HepG2 (cell line): ENCODE measurements at regions of chr7 and their contacts with region 1.

Region 1: DNA sequence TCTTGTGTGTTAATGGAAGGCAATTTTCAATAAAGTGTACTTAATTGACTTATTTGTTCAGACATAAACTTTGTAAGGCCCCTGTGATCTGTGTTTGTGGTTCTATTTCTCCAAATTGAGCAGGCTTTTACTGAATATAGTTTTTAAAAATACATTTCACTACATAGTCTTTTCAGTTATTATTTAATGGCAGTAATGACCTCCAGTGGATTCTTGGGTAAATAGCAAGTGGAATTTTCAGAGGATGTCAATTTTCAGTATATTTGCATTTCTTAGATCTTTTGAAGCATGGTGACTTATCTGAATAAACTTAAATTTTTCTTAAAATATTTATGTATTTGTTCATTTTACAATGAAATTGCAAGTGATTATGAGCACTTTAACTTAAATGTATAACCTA is 203.1 kb upstream of the PCLO start:
- DNase-seq: no peak
- ATAC-seq: no peak
- H3K4me3 ChIP-seq: no peak overlapping the region
- H3K27ac ChIP-seq: no peak overlapping the region
- H3K4me1 ChIP-seq: no peaks in the 10 kb centered on the region
- H3K27me3 ChIP-seq: no peaks in the 10 kb centered on the region
- CTCF ChIP-seq: no peak
- EP300 ChIP-seq: no peak
- POLR2A ChIP-seq: no peak
- RAD21 ChIP-seq: no peak

Region 2: DNA sequence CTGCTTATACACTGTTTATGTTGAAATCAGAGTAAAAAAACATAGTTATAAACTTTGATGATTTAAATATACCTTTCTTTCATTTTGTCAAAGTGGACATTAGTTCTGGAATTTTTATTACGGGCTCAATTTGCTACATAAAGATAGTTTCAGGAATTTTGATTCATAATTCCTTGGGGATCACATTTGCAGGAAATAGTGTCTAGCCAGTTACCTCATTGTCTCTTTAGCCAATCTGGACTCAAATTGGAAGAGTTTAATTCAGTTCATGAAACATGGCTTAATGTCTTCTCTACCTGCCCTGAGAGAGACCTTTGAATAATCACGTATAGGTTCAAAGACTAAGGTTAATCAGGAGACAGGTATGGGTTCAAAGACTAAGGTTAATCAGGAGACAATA is 1858.5 kb before region 1 on chr7:
- CTCF ChIA-PET with region 1: no interaction called
- POLR2A ChIA-PET with region 1: no interaction called
- in situ Hi-C with region 1: no loop called
- intact Hi-C with region 1: loop called (anchors 5 kb)
- DNase-seq: no peak
- ATAC-seq: no peak
- H3K4me3 ChIP-seq: no peak overlapping the region
- H3K27ac ChIP-seq: no peak overlapping the region
- H3K4me1 ChIP-seq: no peaks in the 10 kb centered on the region
- H3K27me3 ChIP-seq: no peaks in the 10 kb centered on the region
- CTCF ChIP-seq: no peak
- EP300 ChIP-seq: no peak
- POLR2A ChIP-seq: no peak
- RAD21 ChIP-seq: no peak